Heart right ventricle (tissue), 16 donors: ENCODE measurements at regions of chr3 and their contacts with region 1.

Region 1: GRCh38 chr3:131396170-131396569 is 14.6 kb downstream of the NUDT16 start:
- DNase-seq: no peak
- ATAC-seq: peak in 5 of 8 donors; percentile 46 to 88 (median 85)
- H3K4me3 ChIP-seq: no peak overlapping the region
- H3K27ac ChIP-seq: no peak overlapping the region
- H3K4me1 ChIP-seq: peaks cover 0 to 10% (median 0%) of the 10 kb centered on the region in 9 donors
- H3K27me3 ChIP-seq: no peaks in the 10 kb centered on the region
- CTCF ChIP-seq: no peak

Region 2: DNA sequence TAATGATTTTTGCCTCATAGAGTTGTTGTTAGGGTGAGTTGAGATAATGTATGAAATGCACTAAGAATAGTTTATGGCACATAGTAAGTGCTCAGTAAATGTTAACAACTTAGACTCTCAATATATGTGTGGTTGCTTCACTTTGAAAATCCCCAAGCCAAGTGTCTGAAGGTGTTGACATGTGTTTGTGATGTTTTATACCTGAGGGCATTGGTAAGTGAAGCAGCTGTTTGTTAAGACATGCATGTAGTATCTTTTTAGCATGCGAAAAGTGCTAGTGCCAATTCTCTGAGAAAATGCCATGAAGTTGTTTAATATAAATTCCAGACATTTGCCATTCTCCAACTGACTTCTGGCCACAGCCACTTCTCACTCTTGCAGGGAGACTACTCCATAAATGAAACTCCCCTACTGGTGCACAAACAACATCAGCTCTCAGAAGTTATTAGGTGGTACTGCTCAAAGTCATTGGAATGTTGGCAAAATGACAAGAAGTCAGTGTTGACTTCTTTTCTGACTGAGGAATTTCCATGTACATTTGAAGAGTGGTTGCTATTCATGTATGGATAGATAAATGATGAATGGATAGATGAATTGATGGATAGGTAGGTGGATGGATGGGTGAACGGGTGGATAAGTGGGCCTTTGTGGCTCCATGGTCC is 118.2 kb before region 1 on chr3:
- intact Hi-C with region 1: no loop called
- DNase-seq: no peak
- ATAC-seq: no peak
- H3K4me3 ChIP-seq: no peak overlapping the region
- H3K27ac ChIP-seq: no peak overlapping the region
- H3K4me1 ChIP-seq: peaks cover 0 to 15% (median 6%) of the 10 kb centered on the region in 9 donors
- H3K27me3 ChIP-seq: no peaks in the 10 kb centered on the region
- CTCF ChIP-seq: no peak

Region 3: GRCh38 chr3:131470377-131470776 is 74.2 kb after region 1 on chr3:
- intact Hi-C with region 1: loop called in 1 of 10 experiments (anchors 5 kb)
- DNase-seq: no peak
- ATAC-seq: no peak
- H3K4me3 ChIP-seq: no peak overlapping the region
- H3K27ac ChIP-seq: no peak overlapping the region
- H3K4me1 ChIP-seq: peaks cover 0 to 10% (median 0%) of the 10 kb centered on the region in 9 donors
- H3K27me3 ChIP-seq: no peaks in the 10 kb centered on the region
- CTCF ChIP-seq: no peak

Region 4: GRCh38 chr3:132273036-132273435 is 876.9 kb after region 1 on chr3:
- intact Hi-C with region 1: no loop called
- DNase-seq: no peak
- ATAC-seq: no peak
- H3K4me3 ChIP-seq: no peak overlapping the region
- H3K27ac ChIP-seq: no peak overlapping the region
- H3K4me1 ChIP-seq: no peaks in the 10 kb centered on the region
- H3K27me3 ChIP-seq: no peaks in the 10 kb centered on the region
- CTCF ChIP-seq: no peak